Activated T-helper 2 cell treated with anti-CD3 and anti-CD28 coated beads, Interferon-gamma antibody, Interleukin-2, Interleukin-4, amounts not matched to agents 10 μg/mL and 5 μg/mL and 100 μg/mL, durations not matched to agents 14 hours and 24 hours and 36 hours (primary cell): ENCODE measurements at regions of chrX and their contacts with region 1.

Region 1: GRCh38 chrX:70656304-70656703 is 211.7 kb downstream of the DLG3 start:
- DNase-seq: no peak
- H3K4me3 Mint-ChIP-seq: peak overlapping the region; percentile 9
- H3K27ac Mint-ChIP-seq: peak overlapping the region; percentile 36
- H3K4me1 Mint-ChIP-seq: peaks cover 7% of the 10 kb centered on the region
- H3K27me3 Mint-ChIP-seq: no peaks in the 10 kb centered on the region

Region 2: DNA sequence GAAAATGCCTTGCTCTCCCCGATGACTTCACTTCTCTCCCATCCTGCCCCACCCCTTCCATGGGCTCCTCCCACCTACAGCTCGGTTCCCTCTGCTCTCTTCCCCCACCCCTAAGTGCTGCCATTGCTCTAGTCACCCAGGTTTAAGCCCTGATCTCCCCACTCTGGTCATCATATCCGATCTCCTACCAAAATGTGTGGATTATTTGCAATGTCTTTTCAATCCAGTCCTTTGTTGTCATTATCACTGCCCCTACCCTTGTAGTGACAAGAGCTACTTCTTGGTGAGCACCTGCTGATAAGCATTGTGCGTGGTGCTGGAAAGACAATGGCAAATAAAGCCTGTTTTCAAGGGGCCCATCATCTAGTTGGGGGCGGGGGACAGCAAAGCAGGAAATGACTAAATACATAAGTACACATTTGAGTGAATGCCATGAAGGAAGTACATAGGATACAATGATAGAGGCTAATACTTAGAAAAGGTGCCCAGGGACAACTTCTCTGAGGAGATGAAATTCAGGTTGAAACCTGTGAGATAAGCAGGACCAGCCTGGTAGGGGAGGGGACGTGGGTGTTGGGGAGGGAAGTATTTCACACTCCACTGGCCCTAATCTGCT is 147.9 kb before region 1 on chrX:
- intact Hi-C with region 1: loop called (anchors 2 kb)
- DNase-seq: peak; percentile 9
- H3K4me3 Mint-ChIP-seq: peak overlapping the region; percentile 14
- H3K27ac Mint-ChIP-seq: peak overlapping the region; percentile 84
- H3K4me1 Mint-ChIP-seq: peaks cover 35% of the 10 kb centered on the region
- H3K27me3 Mint-ChIP-seq: no peaks in the 10 kb centered on the region

Region 3: DNA sequence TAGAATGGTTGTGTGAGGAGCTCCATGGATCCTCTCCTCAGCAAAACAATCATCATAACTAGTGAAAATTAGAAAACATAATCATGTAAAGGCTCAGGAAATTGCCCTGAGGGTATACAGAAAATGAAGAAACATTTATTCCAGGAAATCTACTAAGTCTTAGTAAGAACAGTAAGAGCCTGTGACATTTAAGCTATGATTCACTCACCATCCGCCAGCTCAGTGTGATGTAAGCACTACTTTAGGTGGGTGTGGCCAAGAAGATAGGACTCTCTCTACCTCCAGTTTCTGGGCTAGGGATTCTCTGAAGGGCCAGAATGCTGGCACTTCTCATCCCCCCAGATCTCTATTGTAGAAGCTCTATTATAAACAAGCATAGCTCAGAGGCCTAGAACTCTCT is 64.2 kb before region 1 on chrX:
- intact Hi-C with region 1: loop called (anchors 10 kb)
- DNase-seq: peak; percentile 8
- H3K4me3 Mint-ChIP-seq: no peak overlapping the region
- H3K27ac Mint-ChIP-seq: peak overlapping the region; percentile 72
- H3K4me1 Mint-ChIP-seq: peaks cover 18% of the 10 kb centered on the region
- H3K27me3 Mint-ChIP-seq: no peaks in the 10 kb centered on the region